ENCODE measurements at regions of chr4 and their contacts with region 1.

Region 1: GRCh38 chr4:19224820-19225219 is 1026.9 kb upstream of the SLIT2 start:
- DNase-seq: no peak
- H3K4me3 Mint-ChIP-seq: no peak overlapping the region
- H3K27ac Mint-ChIP-seq: no peak overlapping the region
- H3K4me1 Mint-ChIP-seq: no peaks in the 10 kb centered on the region
- H3K27me3 Mint-ChIP-seq: no peaks in the 10 kb centered on the region

Region 2: GRCh38 chr4:18934197-18934596 is 290.6 kb before region 1 on chr4:
- intact Hi-C with region 1: no loop called
- DNase-seq: no peak
- H3K4me3 Mint-ChIP-seq: no peak overlapping the region
- H3K27ac Mint-ChIP-seq: no peak overlapping the region
- H3K4me1 Mint-ChIP-seq: no peaks in the 10 kb centered on the region
- H3K27me3 Mint-ChIP-seq: no peaks in the 10 kb centered on the region

Region 3: GRCh38 chr4:20248155-20248558 is 1023.3 kb after region 1 on chr4:
- intact Hi-C with region 1: loop called (anchors 5 kb)
- DNase-seq: peak; percentile 54
- H3K4me3 Mint-ChIP-seq: no peak overlapping the region
- H3K27ac Mint-ChIP-seq: no peak overlapping the region
- H3K4me1 Mint-ChIP-seq: peaks cover 8% of the 10 kb centered on the region
- H3K27me3 Mint-ChIP-seq: peaks cover 19% of the 10 kb centered on the region

Region 4: DNA sequence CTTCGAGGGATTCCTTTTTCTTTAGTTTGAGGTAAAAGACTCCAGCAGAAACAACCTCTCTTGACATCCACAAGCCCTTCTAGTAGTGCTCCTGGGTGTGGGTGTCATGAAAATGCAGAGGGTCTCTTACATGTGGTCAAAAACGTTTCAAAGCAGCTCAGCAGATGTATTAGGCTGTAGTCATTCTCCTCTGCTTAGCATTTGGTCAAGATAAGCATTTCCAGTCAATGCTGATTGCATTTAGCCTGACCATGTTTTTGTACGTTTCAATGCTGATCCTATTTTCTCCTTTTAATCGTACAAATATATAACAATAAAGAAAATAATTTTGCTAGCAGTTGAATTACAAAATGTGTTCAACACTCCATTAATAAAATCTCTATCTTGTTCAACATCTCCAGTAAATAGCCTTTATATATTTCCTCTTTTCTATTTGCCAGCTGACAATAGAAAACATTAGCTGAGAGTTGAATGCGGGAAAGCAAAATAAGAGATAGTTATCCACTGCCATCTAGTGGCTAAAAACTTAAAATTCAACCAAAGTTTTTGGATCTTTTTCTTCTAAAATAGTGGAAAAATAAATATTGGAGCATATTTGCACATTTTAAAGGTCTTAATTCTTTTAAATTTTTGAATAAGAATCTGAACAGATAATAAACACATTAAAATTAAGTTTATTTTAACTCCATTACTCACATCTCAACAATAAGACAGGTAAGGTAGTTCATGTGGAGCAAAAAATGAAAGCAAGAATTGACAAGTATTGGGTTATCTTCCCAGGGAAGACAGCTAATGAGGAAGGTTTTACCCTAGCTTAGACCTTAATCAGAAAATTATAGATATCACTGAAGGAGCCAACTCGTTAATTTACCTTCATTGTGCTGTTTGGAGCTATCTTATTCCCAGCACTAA is 1460.3 kb after region 1 on chr4:
- intact Hi-C with region 1: loop called (anchors 10 kb)
- DNase-seq: no peak
- H3K4me3 Mint-ChIP-seq: no peak overlapping the region
- H3K27ac Mint-ChIP-seq: no peak overlapping the region
- H3K4me1 Mint-ChIP-seq: no peaks in the 10 kb centered on the region
- H3K27me3 Mint-ChIP-seq: peaks cover 13% of the 10 kb centered on the region

Measured in activated CD4-positive, alpha-beta T cell treated with anti-CD3 and anti-CD28 coated beads, Interleukin-2, amount 10 ng/mL, durations not matched to agents 24 days and 14 days (primary cell).